Activated CD4-positive, alpha-beta memory T cell treated with anti-CD3 and anti-CD28 coated beads for 36 hours (primary cell): ENCODE measurements at regions of chr19 and their contacts with region 1.

Region 1: DNA sequence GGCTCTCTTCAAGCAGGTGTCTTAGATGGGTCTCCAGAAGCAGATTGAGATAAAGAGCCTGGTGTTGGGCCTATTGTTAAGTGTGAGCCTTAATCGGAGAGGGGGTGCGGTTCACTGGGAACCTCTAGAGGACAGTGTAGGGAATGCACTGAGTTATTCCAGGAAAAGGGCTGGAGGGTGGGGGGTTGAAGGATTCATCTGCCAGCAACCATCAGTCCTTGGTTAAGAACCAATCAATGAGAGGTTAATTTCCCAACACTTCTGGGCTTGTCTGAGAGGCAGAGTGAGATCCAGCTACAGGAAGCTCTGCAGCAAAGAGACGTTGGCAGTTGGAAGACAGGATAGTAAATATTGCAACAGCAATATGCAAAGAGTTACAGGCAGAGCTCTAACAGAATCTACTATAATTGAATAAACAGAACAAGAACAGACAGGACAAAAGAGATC is 28.7 kb downstream of the CYP4F2 start:
- DNase-seq: peak; percentile 56
- H3K4me3 Mint-ChIP-seq: no peak overlapping the region
- H3K27ac Mint-ChIP-seq: no peak overlapping the region
- H3K4me1 Mint-ChIP-seq: no peaks in the 10 kb centered on the region
- H3K27me3 Mint-ChIP-seq: peaks cover 16% of the 10 kb centered on the region

Region 2: DNA sequence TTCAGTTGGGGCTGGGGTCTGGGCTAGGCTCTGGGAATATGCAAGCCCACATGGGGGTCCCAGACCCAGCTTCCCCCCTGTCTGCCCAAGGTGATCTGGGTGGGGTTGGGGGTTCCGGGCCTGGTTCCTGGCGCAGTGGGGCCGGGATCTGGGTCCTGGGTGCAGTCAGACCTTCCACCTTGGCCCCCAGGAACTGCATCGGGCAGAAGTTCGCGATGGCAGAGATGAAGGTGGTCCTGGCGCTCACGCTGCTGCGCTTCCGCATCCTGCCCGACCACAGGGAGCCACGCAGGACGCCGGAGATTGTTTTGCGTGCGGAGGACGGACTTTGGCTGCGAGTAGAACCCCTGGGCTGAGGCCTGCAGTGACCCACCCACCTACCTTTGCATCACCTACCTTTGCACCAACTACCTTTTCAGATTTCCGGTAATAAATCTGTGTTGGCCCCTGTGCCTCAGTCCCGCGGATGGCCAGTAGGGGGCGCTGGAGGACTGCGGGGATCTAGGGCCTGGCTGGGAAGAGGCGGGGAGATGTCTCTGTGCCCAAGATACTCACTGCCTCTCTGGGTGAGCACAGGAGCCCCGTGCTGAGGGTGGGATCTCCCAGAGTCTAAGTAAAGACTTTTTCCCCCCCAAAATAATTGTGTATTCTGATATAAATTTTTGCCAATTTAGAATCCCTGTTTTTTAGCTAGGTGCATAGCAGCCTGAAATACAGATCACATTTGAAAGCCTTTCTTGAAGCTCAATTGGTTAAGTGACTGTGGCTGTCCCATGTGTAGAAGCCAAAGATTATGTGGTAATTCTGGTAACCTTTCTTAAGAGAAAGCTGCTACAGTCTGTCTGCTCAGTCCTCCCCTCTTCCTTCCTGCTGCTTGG is 239.9 kb before region 1 on chr19:
- CTCF ChIA-PET with region 1: interaction called, 8 read pairs
- POLR2A ChIA-PET with region 1: no interaction called
- intact Hi-C with region 1: loop called (anchors 1 kb)
- DNase-seq: peak; percentile 91
- H3K4me3 Mint-ChIP-seq: no peak overlapping the region
- H3K27ac Mint-ChIP-seq: no peak overlapping the region
- H3K4me1 Mint-ChIP-seq: no peaks in the 10 kb centered on the region
- H3K27me3 Mint-ChIP-seq: peaks cover 7% of the 10 kb centered on the region

Region 3: GRCh38 chr19:15820646-15821045 is 48.5 kb before region 1 on chr19:
- CTCF ChIA-PET with region 1: no interaction called
- POLR2A ChIA-PET with region 1: no interaction called
- intact Hi-C with region 1: loop called (anchors 5 kb)
- DNase-seq: no peak
- H3K4me3 Mint-ChIP-seq: no peak overlapping the region
- H3K27ac Mint-ChIP-seq: no peak overlapping the region
- H3K4me1 Mint-ChIP-seq: peaks cover 3% of the 10 kb centered on the region
- H3K27me3 Mint-ChIP-seq: no peaks in the 10 kb centered on the region